PC-9 (cell line): ENCODE measurements at regions of chr12 and their contacts with region 1.

Region 1: DNA sequence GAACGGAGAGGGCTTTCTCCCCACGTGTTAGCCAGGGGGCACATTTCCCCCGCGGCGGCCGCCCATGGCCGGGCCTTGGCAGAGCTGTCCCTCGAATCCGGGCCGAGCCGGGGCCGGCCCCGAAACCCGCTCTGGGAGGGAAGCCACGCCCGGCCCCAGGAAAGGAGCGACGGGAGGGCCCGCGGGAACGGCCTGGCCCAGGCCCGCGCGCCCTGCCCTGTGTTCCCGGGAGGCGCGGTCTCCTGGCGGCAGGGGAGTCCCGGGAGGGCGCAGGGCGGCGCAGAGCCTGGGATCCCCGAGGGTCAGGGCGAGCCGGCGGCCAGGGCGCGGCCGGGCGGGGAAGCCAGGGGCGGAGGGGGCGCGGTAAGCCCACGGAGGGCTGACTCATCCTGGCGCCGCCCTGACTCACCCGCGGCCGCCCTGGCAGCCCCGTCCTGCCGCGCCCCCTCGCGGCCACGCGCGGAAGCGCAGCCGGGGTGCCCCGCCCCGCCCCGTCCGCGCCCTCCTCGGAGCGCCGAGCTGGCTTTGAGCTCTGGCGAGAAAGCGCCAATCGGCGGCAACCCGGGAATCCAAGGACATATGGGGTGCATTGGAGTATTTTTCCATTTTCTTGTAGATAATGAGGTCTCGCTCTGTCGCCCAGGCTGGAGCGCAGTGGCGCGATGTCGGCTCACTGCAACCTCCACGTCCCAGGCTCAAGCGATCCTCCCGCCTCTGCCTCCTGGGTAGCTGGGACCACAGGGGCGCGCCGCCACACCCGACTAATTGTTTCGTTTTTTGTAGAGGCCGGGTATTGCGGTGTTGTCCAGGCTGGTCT is 31.8 kb upstream of the PLEKHG6 start:
- DNase-seq: peak; percentile 87 to 99
- H3K4me3 ChIP-seq: peak overlapping the region; percentile 70
- H3K27ac ChIP-seq: peak overlapping the region; percentile 97
- H3K4me1 ChIP-seq: peaks cover 78% of the 10 kb centered on the region
- H3K27me3 ChIP-seq: no peaks in the 10 kb centered on the region
- CTCF ChIP-seq: peak; percentile 69

Region 2: DNA sequence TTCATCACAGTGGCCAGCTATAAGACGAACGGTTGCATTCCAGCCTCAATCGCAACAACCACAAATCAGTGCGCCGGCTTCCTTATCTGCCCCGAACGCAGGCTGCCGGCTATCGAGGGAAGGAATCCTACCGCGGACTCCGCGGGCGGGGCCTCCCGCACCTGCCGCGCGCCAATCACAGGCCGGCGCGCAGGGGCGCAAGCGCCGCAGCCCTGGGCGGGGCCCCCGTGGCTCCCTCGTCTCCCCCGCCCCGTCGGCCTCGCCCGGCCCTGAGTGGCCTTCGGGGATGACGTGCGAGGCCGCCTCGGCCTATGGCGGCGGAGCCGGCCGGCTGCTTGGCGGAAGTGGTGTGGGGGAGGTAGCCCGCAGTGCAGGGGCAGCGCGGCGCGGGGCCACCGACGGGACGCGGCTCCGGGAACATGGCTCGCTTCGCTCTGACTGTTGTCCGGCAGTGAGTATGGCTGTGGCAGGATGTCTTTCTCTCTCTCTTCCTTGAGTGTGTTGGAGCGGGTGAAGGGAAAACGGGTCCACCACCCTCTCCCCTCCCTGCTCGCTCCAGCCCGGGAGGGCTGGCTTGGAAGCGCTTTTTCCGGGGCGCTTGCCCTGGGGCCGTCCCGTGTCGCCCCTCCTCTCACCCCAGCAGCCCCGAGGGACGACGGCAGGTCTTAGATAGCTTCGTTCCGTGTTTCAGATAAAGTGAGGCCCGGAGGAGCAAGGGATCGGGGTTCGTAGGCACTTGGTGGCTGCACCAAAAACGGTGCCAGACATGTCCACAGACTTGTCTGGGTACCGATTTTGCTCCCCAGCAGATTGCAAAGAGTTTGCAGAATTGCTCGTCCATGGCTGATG is 1957.6 kb before region 1 on chr12 and contains the start of gene TIGAR:
- CTCF ChIA-PET with region 1: no interaction called
- POLR2A ChIA-PET with region 1: no interaction called
- intact Hi-C with region 1: loop called (anchors 10 kb)
- DNase-seq: peak; percentile 86 to 99
- H3K4me3 ChIP-seq: peak within 1 kb of the TSS; percentile 95
- H3K27ac ChIP-seq: peak within 1 kb of the TSS; percentile 69
- H3K4me1 ChIP-seq: peaks cover 12% of the 10 kb centered on the region
- H3K27me3 ChIP-seq: no peaks in the 10 kb centered on the region
- CTCF ChIP-seq: no peak
- total RNA-seq, gene TIGAR: 9.0 and 13.2 TPM in 2 replicates

Region 3: DNA sequence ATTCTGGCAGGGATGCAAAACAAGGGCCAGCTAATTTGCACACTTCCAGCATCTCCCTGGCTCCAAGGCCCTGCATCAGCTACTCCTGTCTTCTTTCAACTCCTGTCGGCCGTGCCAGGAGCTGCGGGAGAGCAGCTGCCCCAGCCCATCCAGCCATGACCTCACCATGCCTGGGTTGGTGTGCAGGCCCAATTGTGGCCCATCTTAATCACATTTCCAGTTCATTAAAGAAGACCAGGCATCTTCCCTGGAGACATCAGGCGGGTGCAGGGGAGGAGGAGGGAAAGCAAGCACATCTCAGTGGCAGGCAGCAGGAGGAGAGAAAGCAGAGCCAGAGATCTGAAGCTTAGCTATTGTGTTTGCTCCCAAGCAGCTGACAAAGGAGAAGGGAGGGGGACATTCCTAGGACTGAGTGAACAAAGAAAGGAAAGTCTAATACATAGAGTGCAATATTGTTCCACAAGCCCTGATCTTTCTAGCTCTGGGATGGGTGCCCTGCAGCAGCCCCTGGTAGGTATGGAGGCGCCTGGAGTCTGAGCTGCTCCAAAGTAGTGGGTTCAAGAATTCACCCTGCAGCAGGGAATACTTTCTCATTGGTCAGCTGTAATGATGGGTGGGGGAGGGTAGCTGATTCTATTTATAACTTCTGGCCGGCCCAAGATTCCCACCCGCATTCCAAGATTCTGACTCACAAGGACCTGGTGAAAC is 194.2 kb before region 1 on chr12:
- CTCF ChIA-PET with region 1: interaction called, 14 read pairs
- POLR2A ChIA-PET with region 1: interaction called, 7 read pairs
- intact Hi-C with region 1: loop called (anchors 2 kb)
- DNase-seq: peak; percentile 85 to 87
- H3K4me3 ChIP-seq: no peak overlapping the region
- H3K27ac ChIP-seq: peak overlapping the region; percentile 86
- H3K4me1 ChIP-seq: peaks cover 68% of the 10 kb centered on the region
- H3K27me3 ChIP-seq: no peaks in the 10 kb centered on the region
- CTCF ChIP-seq: no peak

Region 4: GRCh38 chr12:6205144-6205539 is 73.5 kb before region 1 on chr12:
- CTCF ChIA-PET with region 1: interaction called, 9 read pairs
- POLR2A ChIA-PET with region 1: interaction called, 25 read pairs
- intact Hi-C with region 1: loop called (anchors 1 kb)
- DNase-seq: peak in 1 of 2 experiments; percentile 20
- H3K4me3 ChIP-seq: no peak overlapping the region
- H3K27ac ChIP-seq: no peak overlapping the region
- H3K4me1 ChIP-seq: peaks cover 45% of the 10 kb centered on the region
- H3K27me3 ChIP-seq: no peaks in the 10 kb centered on the region
- CTCF ChIP-seq: no peak

Region 5: GRCh38 chr12:6295094-6295811 is 16.6 kb after region 1 on chr12:
- CTCF ChIA-PET with region 1: interaction called, 4 read pairs
- POLR2A ChIA-PET with region 1: interaction called, 10 read pairs
- intact Hi-C with region 1: loop called (anchors 1 kb)
- DNase-seq: peak; percentile 95 to 99
- H3K4me3 ChIP-seq: no peak overlapping the region; the same call in 1 of the 2 replicates
- H3K27ac ChIP-seq: peak overlapping the region; percentile 91
- H3K4me1 ChIP-seq: peaks cover 64% of the 10 kb centered on the region
- H3K27me3 ChIP-seq: no peaks in the 10 kb centered on the region
- CTCF ChIP-seq: no peak

Region 6: DNA sequence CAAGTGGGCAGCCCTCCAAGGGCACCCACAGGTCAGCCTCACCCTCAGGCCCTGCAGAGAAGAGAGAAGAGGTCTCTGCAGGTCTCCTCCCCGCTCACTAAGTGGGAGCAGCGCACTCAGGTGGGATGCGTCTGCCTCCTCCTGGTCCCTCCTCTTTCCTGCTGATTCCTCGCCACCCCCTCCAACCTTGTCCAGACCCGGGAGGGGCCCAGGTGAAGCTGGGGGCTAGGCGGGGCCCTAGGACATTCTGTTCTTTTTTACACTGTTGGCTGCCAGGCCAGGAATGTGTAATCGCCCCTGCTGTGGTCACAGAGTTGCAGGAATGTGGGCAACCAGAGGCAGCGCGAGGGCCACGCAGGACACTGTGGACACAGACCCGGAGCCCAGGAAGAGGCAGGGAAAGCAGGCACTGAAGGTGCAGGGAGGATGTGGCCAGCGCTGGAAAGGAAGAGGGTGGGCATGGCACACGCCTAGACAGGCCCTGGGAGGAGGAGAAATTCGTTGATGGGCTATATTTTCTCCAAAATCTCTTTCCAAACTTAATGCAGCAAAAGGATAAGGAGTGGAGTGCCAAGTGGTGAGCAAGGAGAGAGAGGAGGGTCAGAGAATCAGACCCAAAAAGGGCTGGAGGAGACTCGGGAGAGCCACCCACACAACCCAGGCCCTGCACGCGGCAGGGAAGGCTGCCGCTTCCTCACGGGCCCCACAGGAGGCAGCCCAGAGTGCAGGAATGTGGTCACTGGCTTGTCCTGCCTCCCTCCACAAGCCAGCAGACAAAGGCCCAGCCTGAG is 97.6 kb after region 1 on chr12:
- CTCF ChIA-PET with region 1: no interaction called
- POLR2A ChIA-PET with region 1: interaction called, 6 read pairs
- intact Hi-C with region 1: loop called (anchors 1 kb)
- DNase-seq: peak; percentile 87 to 97
- H3K4me3 ChIP-seq: peak overlapping the region; percentile 62
- H3K27ac ChIP-seq: peak overlapping the region; percentile 89
- H3K4me1 ChIP-seq: peaks cover 41% of the 10 kb centered on the region
- H3K27me3 ChIP-seq: no peaks in the 10 kb centered on the region
- CTCF ChIP-seq: peak; percentile 53; the same call in 1 of the 2 replicates

Region 7: GRCh38 chr12:6613776-6614512 is 335.3 kb after region 1 on chr12:
- CTCF ChIA-PET with region 1: no interaction called
- POLR2A ChIA-PET with region 1: interaction called, 14 read pairs
- intact Hi-C with region 1: no loop called
- DNase-seq: peak; percentile 91 to 97
- H3K4me3 ChIP-seq: peak overlapping the region; percentile 8; the same call in 1 of the 2 replicates
- H3K27ac ChIP-seq: peak overlapping the region; percentile 51
- H3K4me1 ChIP-seq: peaks cover 34% of the 10 kb centered on the region
- H3K27me3 ChIP-seq: no peaks in the 10 kb centered on the region
- CTCF ChIP-seq: no peak